WTC11 (cell line): ENCODE measurements at regions of chr3 and their contacts with region 1.

Region 1: DNA sequence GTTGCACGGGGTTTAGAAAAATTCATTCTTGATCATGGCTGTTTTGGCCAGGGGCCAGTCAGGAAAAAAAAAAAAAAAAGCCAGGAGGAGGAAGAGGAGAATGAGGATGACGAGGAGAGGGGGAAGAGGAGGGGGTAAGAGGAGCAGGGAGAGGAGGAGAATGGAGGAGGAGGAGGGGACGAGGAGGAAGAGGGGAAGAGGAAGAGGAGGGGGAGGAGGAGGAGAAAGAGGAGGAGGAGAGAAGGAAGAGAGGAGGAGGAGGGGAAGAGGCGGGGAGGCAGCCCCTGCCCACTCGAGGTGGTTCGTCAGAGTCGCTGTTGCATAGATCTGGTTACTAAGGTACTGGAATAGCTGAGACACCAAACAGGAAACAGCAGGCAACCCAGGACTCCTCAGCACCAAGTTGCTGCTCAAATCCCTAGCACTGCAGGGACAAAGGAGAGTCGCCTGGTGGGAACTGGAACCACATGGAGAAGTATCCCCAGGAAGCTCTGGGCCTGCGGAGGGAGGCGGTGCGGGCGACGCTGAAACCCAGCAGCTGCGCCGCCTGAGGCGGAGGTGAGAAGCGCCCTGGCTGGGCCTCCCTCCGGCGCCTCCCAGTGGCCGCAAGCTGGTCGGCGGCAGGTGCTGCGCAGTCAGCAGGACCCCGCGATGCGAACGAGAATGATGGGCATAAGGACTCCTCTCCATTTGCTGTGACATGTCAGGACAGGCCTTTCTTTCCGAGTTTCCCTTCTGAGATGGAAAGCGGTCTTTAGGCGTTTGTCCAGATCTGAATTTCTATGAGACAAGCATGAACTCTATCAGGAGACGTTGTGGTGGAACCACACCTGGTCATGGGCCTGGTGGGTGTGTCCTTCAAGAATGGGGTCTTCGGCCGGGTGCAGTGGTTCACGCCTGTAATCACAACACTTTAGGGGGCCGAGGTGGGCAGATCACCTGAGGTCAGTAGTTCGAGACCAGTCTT is 17.5 kb downstream of the FAM240A start:
- DNase-seq: peak; percentile 91
- ATAC-seq: peak; percentile 89
- H3K4me3 Mint-ChIP-seq: peak overlapping the region; percentile 27
- H3K27ac Mint-ChIP-seq: peak overlapping the region; percentile 72
- H3K4me1 Mint-ChIP-seq: peaks cover 51% of the 10 kb centered on the region
- H3K27me3 Mint-ChIP-seq: no peaks in the 10 kb centered on the region; the same call in 1 of the 2 replicates
- CTCF ChIP-seq: peak; percentile 44; the same call in 1 of the 2 replicates

Region 2: DNA sequence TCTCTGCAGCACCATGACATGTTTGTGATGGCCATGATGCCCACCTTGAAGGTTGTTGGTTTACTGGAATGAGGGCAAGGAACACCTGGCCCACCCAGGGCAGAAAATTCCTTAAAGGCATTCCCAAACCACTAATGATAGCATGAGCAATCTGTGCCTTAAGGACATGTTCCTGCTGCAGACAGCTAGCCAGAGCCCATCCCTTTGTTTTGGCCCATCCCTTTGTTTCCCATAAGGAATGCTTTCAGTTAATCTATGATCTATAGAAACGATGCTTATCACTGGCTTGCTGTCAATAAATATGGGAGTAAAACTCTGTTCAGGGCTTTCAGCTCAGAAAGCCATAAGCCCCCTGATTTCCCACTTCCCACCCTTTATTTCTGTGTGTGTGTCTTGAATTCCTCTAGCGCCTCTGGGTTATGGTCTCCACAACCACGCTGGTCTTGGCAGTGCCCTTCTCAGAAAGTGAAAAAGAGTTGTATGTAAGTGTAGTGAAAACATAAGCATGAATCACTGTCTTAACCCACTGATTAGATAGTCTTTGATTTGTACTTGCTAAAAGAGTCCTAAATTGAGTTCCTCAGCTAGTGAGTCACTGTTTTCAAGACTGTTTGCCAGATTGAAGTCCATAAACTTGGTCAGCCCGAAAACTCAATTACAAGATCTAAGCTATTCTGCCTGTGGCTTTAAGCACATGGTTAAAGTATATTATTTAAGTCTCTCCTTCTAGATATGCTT is 294.9 kb before region 1 on chr3:
- CTCF ChIA-PET with region 1: no interaction called
- POLR2A ChIA-PET with region 1: no interaction called
- DNase-seq: no peak
- ATAC-seq: no peak
- H3K4me3 Mint-ChIP-seq: no peak overlapping the region
- H3K27ac Mint-ChIP-seq: no peak overlapping the region
- H3K4me1 Mint-ChIP-seq: no peaks in the 10 kb centered on the region
- H3K27me3 Mint-ChIP-seq: peaks cover 23% of the 10 kb centered on the region
- CTCF ChIP-seq: no peak

Region 3: DNA sequence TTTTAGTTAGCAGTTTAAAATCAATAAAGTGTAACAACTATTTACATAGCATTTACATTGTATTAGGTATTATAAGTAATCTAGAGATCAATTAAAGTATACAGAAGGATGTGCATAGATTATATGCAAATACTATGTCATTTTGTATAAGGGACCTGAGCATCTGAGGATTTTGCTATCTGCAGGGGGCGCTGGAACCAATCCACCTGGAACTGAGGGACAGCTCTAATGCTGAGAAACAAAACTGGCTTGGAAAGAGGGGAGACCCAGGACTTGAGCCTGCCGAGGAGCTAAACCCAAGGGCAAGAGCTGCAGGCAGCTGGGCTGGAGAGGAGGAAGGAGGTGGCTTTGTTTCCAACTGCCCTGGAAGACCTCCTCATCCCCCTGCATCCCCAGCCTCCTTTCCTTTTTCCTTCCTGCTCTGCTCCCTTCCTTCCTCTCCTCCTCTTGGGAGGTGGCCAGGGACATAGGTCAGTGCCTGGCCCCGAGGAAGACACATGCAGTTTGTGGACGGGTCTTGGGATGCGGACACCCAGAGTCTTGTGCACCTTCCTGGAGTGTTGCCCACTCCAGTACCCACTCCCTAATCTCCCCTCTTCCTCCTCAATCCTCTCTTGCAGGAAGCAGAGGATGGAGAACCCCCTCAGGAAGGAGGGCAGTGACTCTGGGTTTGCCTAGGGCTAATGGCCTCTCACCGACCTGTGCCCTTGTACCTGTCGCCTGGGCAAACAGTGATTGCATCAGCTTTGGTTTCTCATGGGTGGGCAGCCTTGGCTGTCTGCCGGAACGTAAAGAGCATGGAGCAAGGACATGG is 132.9 kb before region 1 on chr3:
- CTCF ChIA-PET with region 1: interaction called, 19 read pairs
- POLR2A ChIA-PET with region 1: no interaction called
- DNase-seq: peak; percentile 71
- ATAC-seq: peak; percentile 91
- H3K4me3 Mint-ChIP-seq: no peak overlapping the region
- H3K27ac Mint-ChIP-seq: no peak overlapping the region
- H3K4me1 Mint-ChIP-seq: peaks cover 24% of the 10 kb centered on the region
- H3K27me3 Mint-ChIP-seq: peaks cover 13% of the 10 kb centered on the region
- CTCF ChIP-seq: peak; percentile 19; the same call in 1 of the 2 replicates

Region 4: DNA sequence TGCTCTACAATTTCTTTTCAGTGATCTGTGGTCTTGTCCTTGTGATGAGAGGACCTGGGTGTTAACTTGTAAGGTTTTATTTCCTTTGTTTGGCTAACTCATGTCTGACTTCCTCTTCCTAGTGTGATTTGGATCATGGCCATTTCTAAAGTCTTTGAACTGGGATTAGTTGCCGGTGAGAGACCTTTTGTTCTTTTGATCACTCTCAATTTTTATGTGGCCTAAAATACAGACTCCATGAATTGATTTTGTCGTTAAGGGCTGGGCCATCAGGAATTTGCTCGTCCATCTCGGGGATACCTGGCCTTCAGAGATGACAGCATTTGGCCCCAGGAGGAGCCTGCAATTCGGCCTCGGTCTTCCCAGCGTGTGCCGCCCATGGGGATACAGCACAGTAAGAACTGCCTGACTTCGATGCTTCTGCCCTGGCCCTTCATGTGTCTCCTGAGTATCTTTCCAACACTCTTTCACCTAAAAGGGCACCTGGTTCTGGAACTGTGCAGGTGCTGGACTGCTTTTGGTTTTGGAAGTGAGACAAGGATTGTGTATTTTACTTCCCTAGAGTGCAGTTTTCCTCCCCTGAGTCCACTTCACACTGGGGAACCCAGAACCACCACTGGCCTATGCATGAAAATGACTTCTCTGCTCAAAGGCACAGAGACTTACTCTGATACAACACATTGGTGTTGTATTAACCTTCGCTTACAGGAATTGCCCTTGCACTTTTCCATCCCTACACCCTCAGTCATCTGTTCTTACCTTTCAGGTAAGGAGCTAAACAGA is 50.7 kb before region 1 on chr3:
- CTCF ChIA-PET with region 1: interaction called, 15 read pairs
- POLR2A ChIA-PET with region 1: interaction called, 9 read pairs
- DNase-seq: no peak
- ATAC-seq: no peak
- H3K4me3 Mint-ChIP-seq: peak overlapping the region; percentile 86
- H3K27ac Mint-ChIP-seq: peak overlapping the region; percentile 94
- H3K4me1 Mint-ChIP-seq: peaks cover 68% of the 10 kb centered on the region
- H3K27me3 Mint-ChIP-seq: no peaks in the 10 kb centered on the region; the same call in 1 of the 2 replicates
- CTCF ChIP-seq: no peak

Region 5: GRCh38 chr3:46593274-46593862 is 36.5 kb before region 1 on chr3:
- CTCF ChIA-PET with region 1: interaction called, 17 read pairs
- POLR2A ChIA-PET with region 1: no interaction called
- DNase-seq: no peak
- ATAC-seq: peak; percentile 83
- H3K4me3 Mint-ChIP-seq: no peak overlapping the region
- H3K27ac Mint-ChIP-seq: no peak overlapping the region; the same call in 1 of the 2 replicates
- H3K4me1 Mint-ChIP-seq: peaks cover 25% of the 10 kb centered on the region
- H3K27me3 Mint-ChIP-seq: peaks cover 39% of the 10 kb centered on the region
- CTCF ChIP-seq: no peak

Region 6: GRCh38 chr3:46607603-46608028 is 22.2 kb before region 1 on chr3:
- CTCF ChIA-PET with region 1: interaction called, 28 read pairs
- POLR2A ChIA-PET with region 1: no interaction called
- DNase-seq: peak; percentile 49
- ATAC-seq: peak; percentile 92
- H3K4me3 Mint-ChIP-seq: no peak overlapping the region
- H3K27ac Mint-ChIP-seq: no peak overlapping the region
- H3K4me1 Mint-ChIP-seq: peaks cover 56% of the 10 kb centered on the region
- H3K27me3 Mint-ChIP-seq: peaks cover 2% of the 10 kb centered on the region; the same call in 1 of the 2 replicates
- CTCF ChIP-seq: peak; percentile 21; the same call in 1 of the 2 replicates

Region 7: GRCh38 chr3:46909535-46910442 is 280.0 kb after region 1 on chr3:
- CTCF ChIA-PET with region 1: no interaction called
- POLR2A ChIA-PET with region 1: no interaction called
- DNase-seq: peak; percentile 94
- ATAC-seq: peak; percentile 87
- H3K4me3 Mint-ChIP-seq: no peak overlapping the region
- H3K27ac Mint-ChIP-seq: no peak overlapping the region
- H3K4me1 Mint-ChIP-seq: no peaks in the 10 kb centered on the region
- H3K27me3 Mint-ChIP-seq: no peaks in the 10 kb centered on the region
- CTCF ChIP-seq: peak; percentile 85

Region 8: DNA sequence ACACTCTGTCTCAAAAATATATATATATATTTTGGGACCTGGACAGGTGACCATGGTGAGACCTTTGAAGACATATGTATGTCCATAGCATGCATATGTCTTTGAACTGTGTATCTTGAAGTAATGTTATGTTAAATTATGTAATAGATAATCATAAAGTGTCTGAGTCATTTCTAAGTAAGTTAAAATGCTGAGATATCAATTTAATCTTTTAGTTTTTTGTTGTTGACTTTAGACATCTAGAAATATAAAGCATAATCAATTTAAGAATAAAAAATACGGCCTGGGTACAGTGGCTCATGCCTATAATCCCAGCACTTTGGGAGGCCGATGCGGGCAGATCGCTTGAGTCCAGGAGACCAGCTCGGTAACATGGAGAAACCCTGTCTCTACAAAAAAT is 546.7 kb after region 1 on chr3:
- CTCF ChIA-PET with region 1: no interaction called
- POLR2A ChIA-PET with region 1: no interaction called
- DNase-seq: no peak
- ATAC-seq: no peak
- H3K4me3 Mint-ChIP-seq: no peak overlapping the region
- H3K27ac Mint-ChIP-seq: no peak overlapping the region
- H3K4me1 Mint-ChIP-seq: no peaks in the 10 kb centered on the region
- H3K27me3 Mint-ChIP-seq: no peaks in the 10 kb centered on the region
- CTCF ChIP-seq: no peak